Activated CD8-positive, alpha-beta memory T cell treated with anti-CD3 and anti-CD28 coated beads, Interleukin-2, amount 10 ng/mL, durations not matched to agents 7 days and 5 days (primary cell): ENCODE measurements at regions of chr1 and their contacts with region 1.

Region 1: GRCh38 chr1:2174348-2175054 is 20.1 kb downstream of the FAAP20 start:
- DNase-seq: no peak
- ATAC-seq: peak; percentile 75
- H3K4me3 Mint-ChIP-seq: no peak overlapping the region
- H3K27ac Mint-ChIP-seq: no peak overlapping the region
- H3K4me1 Mint-ChIP-seq: peaks cover 2% of the 10 kb centered on the region
- H3K27me3 Mint-ChIP-seq: no peaks in the 10 kb centered on the region

Region 2: DNA sequence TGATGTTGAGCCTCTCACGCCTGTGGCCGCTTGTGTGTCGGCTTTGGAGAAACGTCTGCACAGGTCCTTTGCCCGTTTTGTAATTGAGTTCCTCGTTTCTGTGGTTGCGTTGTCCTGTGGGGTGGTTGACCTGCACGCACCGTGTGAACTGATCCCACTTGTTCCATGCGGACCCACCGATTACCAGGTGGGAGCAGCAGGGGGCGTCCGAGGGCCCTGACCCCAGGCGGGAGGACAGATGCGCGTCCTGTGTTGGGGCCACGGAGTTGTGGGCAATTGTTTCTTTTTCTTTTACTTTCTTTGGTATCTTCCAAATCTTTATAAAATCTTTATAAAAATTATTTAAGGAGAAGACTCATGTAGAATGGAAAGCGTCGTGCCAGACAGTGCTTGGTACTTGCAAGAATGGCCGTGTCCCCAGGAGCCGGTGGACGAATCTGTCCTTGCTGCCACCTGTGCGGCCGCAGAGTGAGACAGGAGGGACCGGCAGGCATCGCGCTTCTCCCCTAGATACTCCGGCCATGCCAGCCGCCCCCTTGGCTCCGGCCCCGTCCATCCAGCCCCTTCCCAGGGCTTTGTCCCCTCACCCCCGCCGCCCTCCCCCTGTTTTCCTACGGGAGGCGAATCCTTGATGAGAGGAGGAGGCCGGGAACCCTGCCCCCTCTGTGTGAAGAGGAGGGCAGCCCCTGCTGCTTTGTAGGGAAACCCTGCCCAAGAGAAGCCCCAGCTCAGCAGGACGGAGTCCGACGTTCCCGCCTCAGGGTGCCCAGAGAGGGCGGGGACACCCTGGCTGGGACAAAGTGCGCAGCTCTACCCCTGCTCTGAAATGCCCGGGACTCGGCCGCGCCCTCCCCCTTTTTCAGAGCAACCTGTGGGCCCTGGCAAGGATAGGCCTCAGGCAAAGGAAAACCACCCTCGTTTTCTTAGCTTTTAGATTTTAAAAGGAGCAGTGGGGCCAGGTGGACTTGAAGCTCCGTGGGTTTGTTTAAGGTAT is 82.6 kb before region 1 on chr1:
- CTCF ChIA-PET with region 1: interaction called, 15 read pairs
- DNase-seq: peak; percentile 68
- ATAC-seq: peak; percentile 63
- H3K4me3 Mint-ChIP-seq: no peak overlapping the region
- H3K27ac Mint-ChIP-seq: no peak overlapping the region
- H3K4me1 Mint-ChIP-seq: no peaks in the 10 kb centered on the region
- H3K27me3 Mint-ChIP-seq: no peaks in the 10 kb centered on the region

Region 3: GRCh38 chr1:2141036-2141435 is 33.5 kb before region 1 on chr1:
- CTCF ChIA-PET with region 1: interaction called, 19 read pairs
- DNase-seq: no peak
- ATAC-seq: no peak
- H3K4me3 Mint-ChIP-seq: no peak overlapping the region
- H3K27ac Mint-ChIP-seq: no peak overlapping the region
- H3K4me1 Mint-ChIP-seq: peaks cover 6% of the 10 kb centered on the region
- H3K27me3 Mint-ChIP-seq: no peaks in the 10 kb centered on the region

Region 4: DNA sequence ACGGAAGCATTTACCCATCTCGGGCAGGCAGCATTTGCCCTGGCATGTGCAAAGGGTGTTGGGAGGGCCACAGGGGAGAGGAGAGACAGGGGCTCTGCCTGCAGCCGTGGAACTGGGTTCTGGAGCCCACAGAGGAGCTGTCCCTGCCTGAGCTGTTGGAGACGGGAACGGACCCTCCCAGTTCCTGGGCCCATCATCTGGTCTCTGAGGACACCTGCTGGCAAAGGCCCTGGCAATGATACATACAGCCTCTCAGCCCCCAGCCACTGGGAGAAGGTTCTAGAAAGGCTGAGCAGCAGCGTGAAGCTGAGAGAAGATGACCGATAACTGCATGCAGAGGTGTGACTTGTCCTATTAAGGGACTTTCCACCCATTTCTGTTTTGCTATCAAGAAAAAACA is 11.3 kb before region 1 on chr1:
- CTCF ChIA-PET with region 1: interaction called, 31 read pairs
- DNase-seq: no peak
- ATAC-seq: no peak
- H3K4me3 Mint-ChIP-seq: no peak overlapping the region
- H3K27ac Mint-ChIP-seq: no peak overlapping the region
- H3K4me1 Mint-ChIP-seq: peaks cover 5% of the 10 kb centered on the region
- H3K27me3 Mint-ChIP-seq: no peaks in the 10 kb centered on the region

Region 5: DNA sequence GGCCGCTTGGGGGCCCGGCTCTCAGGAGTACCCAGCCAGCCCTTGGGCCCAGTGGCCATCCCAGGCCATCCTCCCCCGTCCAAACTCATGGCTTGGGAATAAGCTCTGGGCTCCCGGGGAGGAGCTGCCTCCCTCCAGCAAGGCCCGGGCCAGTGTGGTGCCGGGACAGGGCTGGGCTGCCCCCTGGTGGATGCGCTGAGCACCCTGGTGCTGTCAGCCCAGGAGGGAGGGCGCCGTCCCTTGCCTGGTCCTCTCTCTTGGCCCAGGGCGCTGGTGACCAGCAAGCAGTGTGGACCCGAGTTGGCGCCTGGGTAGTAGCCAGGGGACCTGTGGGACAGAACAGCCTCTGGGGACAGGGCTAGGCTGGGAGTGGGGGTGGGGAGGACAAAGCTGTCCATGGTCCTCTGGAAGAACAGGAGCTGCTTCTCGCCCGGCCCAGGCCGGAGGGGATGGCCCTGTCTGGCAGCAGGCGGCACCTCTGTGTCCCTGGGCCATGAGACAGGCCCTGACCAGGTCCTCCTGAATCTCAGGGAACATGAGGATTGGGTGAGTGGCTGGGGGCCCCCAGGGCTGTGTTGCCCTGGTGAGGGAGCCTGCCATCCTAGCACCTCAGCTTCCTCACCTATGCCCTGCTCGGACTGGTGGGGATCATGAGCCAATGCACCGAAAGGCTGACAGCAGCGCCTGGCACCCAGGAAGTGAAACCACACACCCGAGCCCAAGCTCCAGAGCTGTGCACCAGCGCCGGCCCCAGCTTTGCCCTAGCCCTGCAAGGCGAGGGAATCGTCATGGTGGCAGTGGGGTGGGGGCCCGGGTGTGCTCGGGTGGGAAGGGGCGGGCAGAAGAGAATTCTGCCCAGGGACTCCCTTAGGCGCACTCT is 207.5 kb after region 1 on chr1:
- CTCF ChIA-PET with region 1: interaction called, 11 read pairs
- DNase-seq: peak; percentile 85
- ATAC-seq: peak; percentile 98
- H3K4me3 Mint-ChIP-seq: no peak overlapping the region
- H3K27ac Mint-ChIP-seq: no peak overlapping the region
- H3K4me1 Mint-ChIP-seq: peaks cover 2% of the 10 kb centered on the region
- H3K27me3 Mint-ChIP-seq: no peaks in the 10 kb centered on the region